Posterior cingulate gyrus (tissue), 11 donors: ENCODE measurements at regions of chr5 and their contacts with region 1.

Region 1: GRCh38 chr5:87899721-87900131 is 368.9 kb downstream of the TMEM161B start:
- DNase-seq: peak in 8 of 10 donors; percentile 23 to 91 (median 58)

Region 2: DNA sequence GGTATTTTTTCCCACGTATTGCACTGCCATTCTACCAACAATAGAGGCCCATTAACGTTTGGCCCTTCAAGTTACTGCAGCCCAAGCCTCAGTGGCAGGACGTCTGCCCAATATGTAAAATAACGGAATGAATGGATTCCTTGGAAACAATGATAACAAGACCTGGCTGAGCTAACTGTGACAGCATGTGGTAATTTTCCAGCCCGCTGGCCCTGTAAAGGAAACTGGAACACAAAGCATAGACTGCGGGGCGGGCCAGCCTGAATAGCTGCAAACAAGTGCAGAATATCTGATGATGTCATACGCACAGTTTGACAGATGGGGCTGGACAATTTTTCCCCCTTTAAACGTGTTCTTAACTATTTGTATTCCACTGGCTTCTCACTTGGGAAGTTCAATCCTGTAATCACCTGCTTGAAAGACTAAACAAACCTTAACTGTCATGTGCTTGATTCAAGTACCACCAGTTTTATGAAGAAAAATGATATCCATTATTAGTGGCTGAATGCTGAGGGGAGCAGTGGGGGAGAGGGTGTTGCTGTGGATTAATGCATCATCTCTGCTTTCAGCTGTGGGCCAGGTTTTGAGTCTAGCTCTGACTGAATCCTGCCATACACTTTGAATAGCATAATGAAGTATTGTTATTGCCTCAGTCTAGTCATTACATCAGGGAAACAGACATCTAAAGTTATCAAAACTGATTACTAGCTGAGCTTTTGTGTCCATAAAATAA is 45.0 kb after region 1 on chr5:
- intact Hi-C with region 1: loop called (anchors 2 kb)
- DNase-seq: peak; percentile 67 to 97 (median 82)

Region 3: DNA sequence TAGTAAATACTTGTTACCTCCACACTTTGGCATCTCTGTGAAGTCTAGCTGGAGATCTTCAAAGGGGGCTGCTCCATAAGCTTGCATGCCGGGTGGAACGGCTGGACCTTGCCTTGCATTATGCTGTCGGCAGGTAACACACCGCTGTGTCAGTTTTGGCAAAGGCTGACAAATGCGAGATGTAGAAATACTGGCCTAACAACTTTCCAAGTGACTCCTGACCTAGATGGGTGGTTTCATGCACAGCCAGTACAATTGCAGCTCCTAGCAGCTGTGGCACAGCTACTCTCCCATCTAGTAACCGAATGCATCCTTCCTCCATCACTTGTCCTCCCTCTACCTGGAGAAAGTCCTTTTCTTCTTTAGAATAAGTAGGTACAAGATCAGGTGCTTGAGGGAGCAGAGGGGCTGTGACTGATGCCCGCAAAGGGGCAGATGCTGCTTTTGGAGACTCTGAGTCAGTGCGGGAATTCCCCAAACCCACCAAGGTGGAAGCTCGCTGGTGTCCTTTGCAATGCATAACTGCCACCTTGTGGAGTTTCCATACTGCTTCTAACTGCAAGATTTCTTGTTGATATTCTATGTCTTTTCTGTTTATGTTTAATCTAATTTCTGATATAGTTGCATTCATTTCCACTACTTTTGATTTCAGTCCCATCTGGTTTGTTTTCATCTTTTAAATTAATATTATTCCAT is 290.6 kb after region 1 on chr5:
- intact Hi-C with region 1: loop called (anchors 2 kb)
- DNase-seq: peak in 6 of 10 donors; percentile 21 to 86 (median 40)

Region 4: DNA sequence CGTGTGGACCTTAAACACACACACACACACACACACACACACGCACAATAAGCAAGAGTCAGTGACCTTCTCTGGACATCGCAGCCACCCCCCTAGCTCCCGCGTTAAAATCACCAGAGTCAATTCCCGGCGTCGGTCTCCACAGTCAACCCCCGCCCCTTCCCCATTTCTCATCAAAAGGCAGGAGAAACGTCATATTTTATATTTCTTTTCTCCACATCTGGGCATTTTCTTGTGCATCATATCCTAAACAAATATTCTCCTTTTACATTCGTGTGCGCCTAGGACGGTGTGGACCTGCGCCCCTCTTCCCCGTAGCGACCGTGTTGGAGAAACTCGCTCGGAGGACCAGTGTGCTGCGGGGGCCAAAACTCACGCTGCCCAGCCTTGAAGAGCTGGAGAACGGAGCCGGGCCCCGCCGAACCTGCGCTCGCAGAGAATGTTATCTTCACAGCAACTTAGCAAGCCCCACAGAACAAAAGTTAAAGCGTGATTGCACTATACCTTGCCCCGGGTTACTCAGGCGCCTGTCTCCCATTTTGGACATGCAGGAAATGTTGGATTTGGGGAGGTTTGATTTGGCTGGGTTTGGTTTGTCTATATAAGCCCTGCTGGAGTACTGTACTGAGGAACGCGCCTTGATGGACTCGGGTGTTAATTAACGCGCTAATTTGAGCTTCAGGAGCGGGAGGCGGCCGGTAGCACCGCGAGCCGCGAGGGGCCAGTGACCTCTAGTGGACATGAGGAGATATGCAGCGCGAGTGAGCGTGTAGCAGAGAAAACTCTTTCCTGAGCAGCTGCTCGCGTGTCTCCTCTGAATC is 790.9 kb after region 1 on chr5:
- intact Hi-C with region 1: loop called (anchors 5 kb)
- DNase-seq: peak; percentile 85 to 98 (median 89)